ENCODE measurements at regions of chr1 and their contacts with region 1.

Region 1: GRCh38 chr1:110787328-110788071 is 85.4 kb upstream of the CD53 start:
- DNase-seq: peak; percentile 89
- ATAC-seq: peak; percentile 82
- H3K4me3 Mint-ChIP-seq: peak overlapping the region; percentile 66
- H3K27ac Mint-ChIP-seq: peak overlapping the region; percentile 96
- H3K4me1 Mint-ChIP-seq: peaks cover 64% of the 10 kb centered on the region
- H3K27me3 Mint-ChIP-seq: no peaks in the 10 kb centered on the region

Region 2: DNA sequence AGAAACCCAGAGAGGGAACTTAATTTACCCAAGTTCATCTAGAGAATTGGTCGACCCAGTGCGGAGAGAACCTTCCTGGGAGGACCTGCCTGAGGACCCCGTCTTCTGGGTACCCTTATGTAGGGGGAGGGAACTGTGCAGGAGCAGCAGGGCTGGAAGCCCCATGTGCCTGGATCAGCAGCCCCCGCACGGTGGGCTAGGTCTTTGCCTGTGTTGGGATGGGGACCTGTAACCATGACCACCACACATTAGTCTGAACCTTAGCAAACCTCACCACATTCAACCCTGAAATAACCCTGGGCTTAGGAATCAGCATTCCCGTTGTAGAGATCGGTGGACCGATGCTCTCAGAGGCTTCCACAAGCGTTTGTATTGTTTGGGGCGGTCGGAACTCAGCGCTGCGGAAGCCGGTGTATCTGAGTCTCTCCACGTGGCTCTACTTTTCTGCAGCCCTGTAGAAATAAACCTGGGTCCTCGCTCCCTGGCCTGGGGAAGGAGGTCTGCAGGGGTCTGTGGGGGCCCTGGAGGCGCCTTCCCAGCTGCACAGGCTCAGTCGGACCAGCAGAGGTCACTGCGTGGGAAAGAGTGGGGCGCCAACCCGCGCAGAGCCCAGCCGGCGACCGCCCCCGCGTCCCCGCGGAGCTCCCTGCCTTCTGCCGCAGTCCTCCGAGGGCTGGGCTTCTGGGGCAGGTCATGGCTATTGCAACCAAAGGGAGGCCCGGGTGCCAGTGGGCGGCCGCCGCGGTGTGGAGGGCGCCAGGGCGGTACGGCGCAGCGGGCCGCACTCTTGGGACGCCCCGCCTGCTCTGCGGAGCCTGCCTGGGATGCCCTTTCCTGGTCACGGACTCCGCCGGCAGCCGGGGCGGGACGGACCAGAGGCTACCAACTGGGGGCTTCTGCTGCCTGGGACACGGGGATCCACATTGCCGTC is 232.4 kb before region 1 on chr1:
- CTCF ChIA-PET with region 1: interaction called, 70 read pairs
- DNase-seq: peak; percentile 64
- ATAC-seq: peak; percentile 90
- H3K4me3 Mint-ChIP-seq: no peak overlapping the region
- H3K27ac Mint-ChIP-seq: no peak overlapping the region
- H3K4me1 Mint-ChIP-seq: peaks cover 8% of the 10 kb centered on the region
- H3K27me3 Mint-ChIP-seq: peaks cover 54% of the 10 kb centered on the region

Region 3: DNA sequence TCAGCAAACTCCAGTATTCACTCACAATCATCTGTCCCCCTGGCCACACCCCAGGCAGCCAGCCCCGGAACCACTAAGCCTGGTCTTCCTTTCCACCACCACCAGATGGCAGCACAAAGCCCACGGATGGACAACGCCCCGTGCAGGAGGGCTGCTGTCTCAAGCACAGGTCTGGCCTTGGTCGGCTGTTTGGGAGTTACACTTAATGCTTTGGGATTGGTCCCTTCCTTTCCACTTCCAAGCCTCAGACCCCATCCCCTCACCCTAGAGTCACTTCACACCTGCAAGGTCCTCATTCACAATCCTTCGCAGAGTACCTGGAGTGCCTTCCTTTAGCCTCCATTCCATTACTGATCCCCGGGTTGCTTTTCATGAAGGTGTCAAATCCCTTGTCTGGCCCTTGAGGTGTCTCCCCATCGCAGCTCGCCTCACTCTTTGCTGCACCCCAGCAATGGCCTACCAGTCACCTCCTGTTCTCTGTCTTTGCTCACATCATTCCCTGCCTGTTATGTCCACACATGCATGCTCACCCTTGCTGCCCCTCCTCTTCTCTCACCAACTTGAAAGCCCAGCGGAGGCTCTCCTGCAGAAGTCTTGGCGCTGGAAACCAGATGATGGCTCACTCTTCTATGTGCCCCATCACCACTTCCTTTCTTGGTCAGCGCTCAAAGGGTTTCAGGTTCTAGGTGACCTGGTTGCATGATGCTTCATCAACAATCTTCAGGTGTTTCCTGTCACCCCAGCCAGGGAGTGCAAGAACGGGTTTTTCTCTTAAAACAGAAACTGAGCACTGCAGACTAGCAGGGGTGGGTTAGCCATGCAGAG is 156.4 kb before region 1 on chr1:
- CTCF ChIA-PET with region 1: interaction called, 27 read pairs
- DNase-seq: peak; percentile 95
- ATAC-seq: peak; percentile 84
- H3K4me3 Mint-ChIP-seq: no peak overlapping the region
- H3K27ac Mint-ChIP-seq: no peak overlapping the region
- H3K4me1 Mint-ChIP-seq: peaks cover 33% of the 10 kb centered on the region
- H3K27me3 Mint-ChIP-seq: no peaks in the 10 kb centered on the region

Region 4: DNA sequence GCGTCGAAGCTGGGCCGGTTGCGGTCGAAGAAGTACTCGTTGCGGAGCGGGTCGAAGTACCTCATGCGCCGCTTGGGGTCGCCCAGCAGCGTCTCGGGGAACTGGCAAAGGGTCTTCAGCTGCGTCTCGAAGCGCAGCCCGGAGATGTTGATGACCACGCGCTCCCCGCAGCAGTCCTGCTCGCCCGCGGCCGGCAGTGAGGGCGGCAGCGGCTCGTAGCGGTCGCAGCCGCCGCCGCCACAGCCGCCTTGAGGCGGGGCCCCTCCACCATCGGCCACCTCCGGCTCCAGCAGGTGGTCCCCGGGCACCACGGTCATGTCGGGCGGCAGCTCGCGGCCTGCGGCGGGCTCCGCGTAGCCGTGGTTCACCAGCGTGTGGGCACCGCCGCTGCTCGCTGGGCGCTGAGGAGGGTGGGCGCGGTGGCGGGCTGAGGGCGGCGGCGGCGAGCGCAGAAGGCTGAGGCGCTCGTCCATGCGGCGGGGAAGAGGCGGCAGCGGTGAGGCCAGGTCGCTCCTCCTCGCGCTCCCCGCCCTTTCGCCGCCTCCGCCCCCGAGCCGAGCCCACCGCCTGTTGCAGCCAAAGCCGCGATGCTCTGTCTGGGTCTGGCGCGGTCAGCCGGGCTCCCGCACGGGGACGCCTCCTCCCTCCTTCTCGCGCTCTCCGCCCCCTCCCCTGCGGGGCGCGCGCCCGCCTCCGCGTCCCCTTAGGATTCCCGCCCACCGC is 113.0 kb before region 1 on chr1 and contains the start of gene KCNA3:
- CTCF ChIA-PET with region 1: interaction called, 12 read pairs
- DNase-seq: peak; percentile 83
- ATAC-seq: peak; percentile 43
- H3K4me3 Mint-ChIP-seq: peak within 1 kb of the TSS; percentile 100
- H3K27ac Mint-ChIP-seq: peak within 1 kb of the TSS; percentile 96
- H3K4me1 Mint-ChIP-seq: peaks cover 14% of the 10 kb centered on the region
- H3K27me3 Mint-ChIP-seq: no peaks in the 10 kb centered on the region
- total RNA-seq, gene KCNA3: 59.8 to 95.2 TPM

Region 5: GRCh38 chr1:110798691-110799256 is 11.3 kb after region 1 on chr1:
- CTCF ChIA-PET with region 1: interaction called, 10 read pairs
- DNase-seq: no peak
- ATAC-seq: no peak
- H3K4me3 Mint-ChIP-seq: no peak overlapping the region
- H3K27ac Mint-ChIP-seq: no peak overlapping the region
- H3K4me1 Mint-ChIP-seq: peaks cover 2% of the 10 kb centered on the region
- H3K27me3 Mint-ChIP-seq: peaks cover 3% of the 10 kb centered on the region

Region 6: DNA sequence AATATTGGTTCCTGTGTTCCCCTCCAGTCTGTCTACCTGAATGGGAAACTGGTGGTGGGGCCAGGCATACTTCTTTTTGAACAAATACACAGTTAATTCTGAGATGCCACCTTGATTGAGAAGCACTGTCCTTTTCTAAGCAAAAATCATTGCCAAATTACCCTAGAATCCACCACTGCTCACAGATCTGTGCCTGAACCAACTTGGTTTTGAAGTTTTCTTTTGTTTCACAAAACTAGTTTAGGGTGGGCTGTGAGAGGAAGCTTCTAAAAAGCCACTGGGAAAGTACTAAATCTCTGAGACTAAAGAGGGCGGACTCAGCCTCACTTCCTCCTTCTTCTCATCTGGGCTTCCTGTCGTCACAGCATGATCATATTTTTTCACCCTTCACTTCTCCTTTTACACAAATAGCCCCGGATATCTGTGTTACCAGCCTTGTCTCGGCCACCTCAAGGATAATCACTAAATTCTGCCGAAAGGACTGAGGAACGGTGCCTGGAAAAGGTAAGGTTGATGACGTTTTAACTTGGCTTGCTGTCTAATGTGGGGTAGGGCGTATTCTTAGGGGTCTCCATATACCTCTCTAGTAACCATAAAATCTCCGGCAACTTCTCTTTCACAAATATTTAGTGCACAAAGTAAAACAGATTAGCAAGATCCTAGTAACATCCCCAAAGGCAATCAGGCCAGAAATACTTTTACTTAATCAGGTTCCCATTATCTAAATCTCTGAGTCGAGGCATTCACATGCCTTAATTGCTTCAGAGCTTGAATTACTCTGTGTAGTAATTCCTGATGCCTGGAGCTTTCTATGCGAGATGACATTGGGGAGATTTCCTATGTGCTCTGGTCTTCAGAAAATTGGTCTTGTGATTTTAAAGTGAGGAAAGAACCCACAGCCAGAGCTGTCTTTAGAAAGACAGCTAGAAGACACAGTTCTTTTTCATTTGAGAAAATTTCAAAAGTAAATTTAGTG is 85.5 kb after region 1 on chr1 and contains the start of gene CD53:
- CTCF ChIA-PET with region 1: interaction called, 17 read pairs
- DNase-seq: peak; percentile 75
- ATAC-seq: peak; percentile 40
- H3K4me3 Mint-ChIP-seq: peak within 1 kb of the TSS; percentile 92
- H3K27ac Mint-ChIP-seq: peak within 1 kb of the TSS; percentile 92
- H3K4me1 Mint-ChIP-seq: peaks cover 28% of the 10 kb centered on the region
- H3K27me3 Mint-ChIP-seq: no peaks in the 10 kb centered on the region
- total RNA-seq, gene CD53: 403 to 439 TPM

Measured in activated CD8-positive, alpha-beta memory T cell treated with anti-CD3 and anti-CD28 coated beads, Interleukin-2, amount 10 ng/mL, durations not matched to agents 7 days and 5 days (primary cell).